Endothelial cell of umbilical vein (primary cell): ENCODE measurements at regions of chr2 and their contacts with region 1.

Region 1: DNA sequence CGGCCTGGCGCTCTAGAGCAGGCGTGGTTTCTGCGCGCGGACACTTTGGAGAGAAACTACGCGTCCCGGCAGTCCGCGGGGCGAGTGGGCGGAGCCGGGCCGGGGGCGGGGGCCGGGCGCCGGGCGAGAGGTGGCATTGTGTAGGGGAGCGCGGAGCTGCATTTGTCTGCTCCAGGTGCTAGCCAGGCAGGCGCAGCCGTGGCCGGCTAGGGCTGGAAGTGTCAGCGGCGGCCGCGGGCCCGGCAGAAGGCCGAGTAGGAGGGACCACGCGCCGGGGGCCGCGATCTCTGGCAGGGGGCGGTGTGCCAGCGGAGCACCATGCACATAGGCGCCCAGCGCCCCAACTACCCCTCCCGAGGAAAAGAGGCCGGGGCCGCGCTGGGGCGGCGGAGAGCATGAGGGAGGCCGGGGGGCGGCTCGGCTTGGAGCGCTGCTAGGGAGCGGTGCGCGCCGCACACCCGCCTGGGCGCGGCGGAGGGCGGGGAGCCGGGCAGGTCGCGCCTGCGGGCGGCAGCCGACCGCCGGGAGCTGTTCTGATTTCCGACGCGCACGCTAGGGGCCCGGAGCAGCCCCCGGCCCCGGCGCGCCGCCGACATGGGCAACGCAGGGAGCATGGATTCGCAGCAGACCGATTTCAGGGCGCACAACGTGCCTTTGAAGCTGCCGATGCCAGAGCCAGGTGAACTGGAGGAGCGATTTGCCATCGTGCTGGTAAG is at the start of gene FMNL2:
- DNase-seq: peak; percentile 89
- H3K4me3 ChIP-seq: peak within 1 kb of the TSS; percentile 81 to 96 (median 95)
- H3K27ac ChIP-seq: peak within 1 kb of the TSS; percentile 32
- H3K4me1 ChIP-seq: peaks cover 16% of the 10 kb centered on the region
- H3K27me3 ChIP-seq: no peaks in the 10 kb centered on the region
- CTCF ChIP-seq: peak in 1 of 2 donors; percentile 0
- POLR2A ChIP-seq: peak; percentile 88
- total RNA-seq, gene FMNL2: 25.5 and 28.0 TPM in 2 replicates

Region 2: GRCh38 chr2:152367547-152368390 is 32.6 kb after region 1 on chr2:
- CTCF ChIA-PET with region 1: no interaction called
- POLR2A ChIA-PET with region 1: no interaction called
- dilution Hi-C with region 1: no loop called
- intact Hi-C with region 1: no loop called
- DNase-seq: no peak
- H3K4me3 ChIP-seq: no peak overlapping the region
- H3K27ac ChIP-seq: no peak overlapping the region
- H3K4me1 ChIP-seq: no peaks in the 10 kb centered on the region
- H3K27me3 ChIP-seq: no peaks in the 10 kb centered on the region
- CTCF ChIP-seq: no peak
- POLR2A ChIP-seq: no peak

Region 3: GRCh38 chr2:152407204-152407721 is 72.1 kb after region 1 on chr2:
- CTCF ChIA-PET with region 1: interaction called, 4 read pairs
- POLR2A ChIA-PET with region 1: no interaction called
- dilution Hi-C with region 1: no loop called
- intact Hi-C with region 1: loop called (anchors 2 kb)
- DNase-seq: no peak
- H3K4me3 ChIP-seq: no peak overlapping the region
- H3K27ac ChIP-seq: peak overlapping the region; percentile 19
- H3K4me1 ChIP-seq: peaks cover 57% of the 10 kb centered on the region
- H3K27me3 ChIP-seq: no peaks in the 10 kb centered on the region
- CTCF ChIP-seq: no peak
- POLR2A ChIP-seq: no peak

Region 4: DNA sequence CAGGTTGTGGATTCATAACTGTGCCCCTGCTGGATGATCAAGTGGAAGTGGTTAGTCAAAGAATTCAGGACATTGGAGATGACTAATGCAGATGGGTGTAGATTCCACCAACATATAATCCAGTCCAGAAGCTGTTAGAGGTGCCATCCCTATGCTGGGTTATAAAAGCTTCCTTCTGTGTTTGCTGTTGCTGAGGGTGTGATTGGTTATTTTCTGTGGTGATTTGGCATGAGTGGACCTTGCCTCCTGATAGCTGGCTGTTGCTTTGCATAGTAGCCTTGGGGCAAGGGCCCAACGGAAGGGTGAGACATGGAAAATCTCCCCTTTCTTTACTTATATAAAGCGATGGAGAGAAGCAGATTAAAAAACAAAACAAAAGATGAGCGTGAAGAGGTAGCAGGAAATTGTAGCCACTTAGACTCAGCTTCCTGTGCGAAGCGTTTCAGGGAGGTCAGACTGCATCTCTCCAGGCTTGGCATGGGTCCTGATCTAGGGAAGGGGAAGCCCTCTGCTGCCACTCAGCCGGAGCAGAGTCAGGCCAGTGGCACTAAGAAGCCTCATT is 190.2 kb after region 1 on chr2:
- CTCF ChIA-PET with region 1: interaction called, 10 read pairs
- POLR2A ChIA-PET with region 1: no interaction called
- dilution Hi-C with region 1: no loop called
- intact Hi-C with region 1: loop called (anchors 10 kb)
- DNase-seq: peak; percentile 87
- H3K4me3 ChIP-seq: peak overlapping the region in 1 of 3 experiments; percentile 2
- H3K27ac ChIP-seq: peak overlapping the region; percentile 69
- H3K4me1 ChIP-seq: peaks cover 39% of the 10 kb centered on the region
- H3K27me3 ChIP-seq: no peaks in the 10 kb centered on the region
- CTCF ChIP-seq: no peak
- POLR2A ChIP-seq: no peak

Region 5: GRCh38 chr2:152611458-152612231 is 276.5 kb after region 1 on chr2:
- CTCF ChIA-PET with region 1: interaction called, 3 read pairs
- POLR2A ChIA-PET with region 1: no interaction called
- dilution Hi-C with region 1: no loop called
- intact Hi-C with region 1: loop called (anchors 5 kb)
- DNase-seq: peak; percentile 56
- H3K4me3 ChIP-seq: no peak overlapping the region
- H3K27ac ChIP-seq: no peak overlapping the region
- H3K4me1 ChIP-seq: peaks cover 15% of the 10 kb centered on the region
- H3K27me3 ChIP-seq: no peaks in the 10 kb centered on the region
- CTCF ChIP-seq: no peak
- POLR2A ChIP-seq: no peak

Region 6: DNA sequence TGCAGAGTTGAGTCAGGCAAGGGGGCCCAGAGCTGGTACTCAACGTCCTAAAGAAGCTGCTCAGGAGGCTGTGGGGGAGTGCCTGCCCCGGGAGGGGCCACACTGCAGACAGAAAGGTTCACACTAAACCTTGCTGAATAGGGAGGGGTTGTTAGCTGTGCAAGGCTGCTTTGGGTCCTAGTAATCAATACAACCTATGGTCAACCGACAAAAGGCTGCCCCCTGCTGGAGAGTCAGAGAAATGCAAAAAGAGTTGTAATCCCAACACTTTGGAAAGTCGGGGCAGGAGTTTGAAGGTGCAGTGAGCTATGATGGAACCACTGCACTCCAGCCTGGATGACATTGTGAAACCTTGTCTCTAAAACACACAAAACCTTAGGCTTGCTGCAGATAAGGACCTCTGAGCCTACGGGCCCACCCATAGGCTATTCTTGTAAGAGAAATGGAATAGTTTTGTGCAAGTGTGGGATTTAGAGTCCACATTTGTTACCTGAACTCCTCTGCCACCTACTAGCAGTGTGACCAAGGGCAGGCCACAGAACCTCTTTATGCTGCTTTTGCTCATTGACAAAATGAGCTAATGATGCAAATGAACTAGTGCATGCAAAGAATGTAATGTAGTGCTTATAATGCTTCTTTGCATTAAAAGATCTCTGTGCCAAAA is 300.6 kb after region 1 on chr2:
- CTCF ChIA-PET with region 1: interaction called, 21 read pairs
- POLR2A ChIA-PET with region 1: no interaction called
- dilution Hi-C with region 1: no loop called
- intact Hi-C with region 1: loop called (anchors 2 kb)
- DNase-seq: peak; percentile 58
- H3K4me3 ChIP-seq: no peak overlapping the region
- H3K27ac ChIP-seq: no peak overlapping the region
- H3K4me1 ChIP-seq: no peaks in the 10 kb centered on the region
- H3K27me3 ChIP-seq: no peaks in the 10 kb centered on the region
- CTCF ChIP-seq: peak; percentile 74 to 81
- POLR2A ChIP-seq: no peak